Endothelial cell of umbilical vein (primary cell): ENCODE measurements at regions of chr9 and their contacts with region 1.

Region 1: GRCh38 chr9:91681461-91682305 is 258.1 kb upstream of the NFIL3 start:
- DNase-seq: peak; percentile 48
- H3K4me3 ChIP-seq: no peak overlapping the region
- H3K27ac ChIP-seq: no peak overlapping the region
- H3K4me1 ChIP-seq: no peaks in the 10 kb centered on the region
- H3K27me3 ChIP-seq: peaks cover 0 to 2% of the 10 kb centered on the region in 2 experiments
- CTCF ChIP-seq: peak; percentile 84 to 96
- POLR2A ChIP-seq: no peak

Region 2: GRCh38 chr9:90985631-90986030 is 696.1 kb before region 1 on chr9:
- CTCF ChIA-PET with region 1: no interaction called
- POLR2A ChIA-PET with region 1: no interaction called
- dilution Hi-C with region 1: no loop called
- intact Hi-C with region 1: loop called (anchors 2 kb)
- DNase-seq: peak; percentile 5
- H3K4me3 ChIP-seq: no peak overlapping the region
- H3K27ac ChIP-seq: no peak overlapping the region
- H3K4me1 ChIP-seq: peaks cover 7% of the 10 kb centered on the region
- H3K27me3 ChIP-seq: no peaks in the 10 kb centered on the region
- CTCF ChIP-seq: no peak
- POLR2A ChIP-seq: no peak